ENCODE measurements at regions of chr14 and their contacts with region 1.

Region 1: DNA sequence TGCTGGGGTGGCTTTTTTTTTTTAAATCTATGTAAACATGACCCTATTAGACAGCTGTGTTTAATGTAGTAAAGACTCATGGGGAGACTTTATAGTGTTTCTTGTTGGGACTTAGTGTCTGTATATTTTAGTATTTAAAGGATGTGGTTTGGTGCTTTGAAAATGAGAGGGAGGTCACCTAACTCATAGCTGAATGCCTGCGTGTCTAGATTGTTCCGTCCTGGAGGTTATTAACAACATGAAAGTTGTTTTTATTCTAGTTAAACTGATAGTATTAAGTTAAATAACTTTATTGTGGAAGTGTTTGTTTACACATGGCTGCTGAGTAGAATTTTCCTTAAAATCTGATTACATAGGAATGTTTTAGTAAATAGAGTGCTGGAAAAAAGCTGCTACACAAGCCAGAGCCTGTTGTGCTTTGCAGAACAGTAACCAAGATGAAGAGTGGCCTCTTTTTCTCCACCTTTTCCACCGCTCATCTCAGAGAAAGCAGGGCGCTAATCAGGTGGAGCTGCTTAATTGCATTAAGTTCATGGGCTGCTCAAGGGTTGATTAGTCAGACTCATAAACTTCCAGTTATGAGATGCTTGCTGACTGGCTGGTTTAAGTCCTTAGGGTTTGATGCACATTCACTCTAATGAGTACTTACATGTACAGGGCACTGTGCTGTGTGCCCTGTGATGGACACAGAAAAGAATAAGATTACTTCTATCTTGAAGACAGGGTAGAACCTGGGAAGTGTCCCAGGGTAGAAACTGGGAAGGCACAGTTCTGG is 62.7 kb downstream of the FBXO34 start:
- DNase-seq: peak; percentile 20
- H3K4me3 Mint-ChIP-seq: peak overlapping the region; percentile 9
- H3K27ac Mint-ChIP-seq: peak overlapping the region; percentile 57
- H3K4me1 Mint-ChIP-seq: peaks cover 85% of the 10 kb centered on the region
- H3K27me3 Mint-ChIP-seq: no peaks in the 10 kb centered on the region

Region 2: DNA sequence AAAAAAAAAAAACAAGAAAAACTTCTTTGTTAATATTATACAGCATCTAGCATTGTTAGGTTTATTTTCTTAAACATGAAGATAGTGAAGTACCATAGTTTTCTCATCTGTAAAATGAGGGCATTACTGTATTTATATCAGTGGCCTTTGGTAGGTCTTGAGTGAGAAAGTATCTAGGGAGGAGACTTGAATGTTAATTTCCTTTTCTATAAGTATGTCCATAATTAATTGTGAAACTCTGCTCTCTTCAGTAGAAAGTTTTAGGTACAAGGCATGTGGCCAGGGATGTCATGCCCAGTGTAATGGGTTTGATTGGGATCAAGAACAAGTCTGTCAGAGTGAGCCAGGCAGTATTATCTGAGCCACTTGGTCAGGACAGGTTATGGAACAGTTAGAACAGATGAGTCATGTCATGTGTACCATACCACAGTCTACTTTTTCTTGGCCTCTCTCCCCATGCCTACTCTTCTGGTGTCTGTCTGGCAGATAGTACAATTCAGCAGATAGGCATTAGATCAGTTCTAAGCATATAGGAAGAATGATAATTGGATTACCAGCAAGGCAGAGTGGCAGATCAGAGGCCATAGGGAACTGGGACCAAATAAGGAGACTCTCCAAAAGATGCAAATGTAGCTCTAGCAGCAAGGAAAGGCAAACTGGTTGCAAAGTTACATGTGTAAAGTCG is 32.3 kb before region 1 on chr14:
- CTCF ChIA-PET with region 1: interaction called, 3 read pairs
- POLR2A ChIA-PET with region 1: no interaction called
- intact Hi-C with region 1: loop called (anchors 2 kb)
- DNase-seq: peak; percentile 21
- H3K4me3 Mint-ChIP-seq: no peak overlapping the region
- H3K27ac Mint-ChIP-seq: peak overlapping the region; percentile 1
- H3K4me1 Mint-ChIP-seq: peaks cover 69% of the 10 kb centered on the region
- H3K27me3 Mint-ChIP-seq: no peaks in the 10 kb centered on the region

Region 3: GRCh38 chr14:55348766-55349453 is 15.0 kb after region 1 on chr14:
- CTCF ChIA-PET with region 1: interaction called, 49 read pairs
- POLR2A ChIA-PET with region 1: interaction called, 6 read pairs
- intact Hi-C with region 1: loop called (anchors 1 kb)
- DNase-seq: peak; percentile 29
- H3K4me3 Mint-ChIP-seq: peak overlapping the region; percentile 9
- H3K27ac Mint-ChIP-seq: no peak overlapping the region
- H3K4me1 Mint-ChIP-seq: peaks cover 58% of the 10 kb centered on the region
- H3K27me3 Mint-ChIP-seq: no peaks in the 10 kb centered on the region

Region 4: GRCh38 chr14:55373784-55374705 is 40.1 kb after region 1 on chr14:
- CTCF ChIA-PET with region 1: interaction called, 5 read pairs
- POLR2A ChIA-PET with region 1: interaction called, 6 read pairs
- intact Hi-C with region 1: loop called (anchors 1 kb)
- DNase-seq: peak; percentile 45
- H3K4me3 Mint-ChIP-seq: peak overlapping the region; percentile 49
- H3K27ac Mint-ChIP-seq: peak overlapping the region; percentile 91
- H3K4me1 Mint-ChIP-seq: peaks cover 45% of the 10 kb centered on the region
- H3K27me3 Mint-ChIP-seq: no peaks in the 10 kb centered on the region

Region 5: GRCh38 chr14:55389330-55389729 is 55.4 kb after region 1 on chr14:
- CTCF ChIA-PET with region 1: interaction called, 4 read pairs
- POLR2A ChIA-PET with region 1: interaction called, 3 read pairs
- intact Hi-C with region 1: loop called (anchors 5 kb)
- DNase-seq: no peak
- H3K4me3 Mint-ChIP-seq: no peak overlapping the region
- H3K27ac Mint-ChIP-seq: peak overlapping the region; percentile 53
- H3K4me1 Mint-ChIP-seq: peaks cover 49% of the 10 kb centered on the region
- H3K27me3 Mint-ChIP-seq: no peaks in the 10 kb centered on the region

Region 6: GRCh38 chr14:55579724-55580469 is 246.0 kb after region 1 on chr14 and contains the start of gene KTN1:
- CTCF ChIA-PET with region 1: no interaction called
- POLR2A ChIA-PET with region 1: no interaction called
- intact Hi-C with region 1: loop called (anchors 5 kb)
- DNase-seq: peak; percentile 87
- H3K4me3 Mint-ChIP-seq: peak within 1 kb of the TSS; percentile 92
- H3K27ac Mint-ChIP-seq: peak within 1 kb of the TSS; percentile 90
- H3K4me1 Mint-ChIP-seq: peaks cover 31% of the 10 kb centered on the region
- H3K27me3 Mint-ChIP-seq: no peaks in the 10 kb centered on the region
- total RNA-seq, gene KTN1: 126 to 134 TPM

Measured in activated CD4-positive, alpha-beta memory T cell treated with anti-CD3 and anti-CD28 coated beads for 36 hours (primary cell).